ENCODE measurements at regions of chr2 and their contacts with region 1.

Region 1: GRCh38 chr2:65456064-65456463 is 23.7 kb upstream of the SPRED2 start:
- DNase-seq: no peak
- ATAC-seq: no peak
- H3K4me3 ChIP-seq: no peak overlapping the region
- H3K27ac ChIP-seq: no peak overlapping the region
- H3K4me1 ChIP-seq: no peaks in the 10 kb centered on the region
- H3K27me3 ChIP-seq: no peaks in the 10 kb centered on the region
- CTCF ChIP-seq: no peak
- POLR2A ChIP-seq: no peak

Region 2: DNA sequence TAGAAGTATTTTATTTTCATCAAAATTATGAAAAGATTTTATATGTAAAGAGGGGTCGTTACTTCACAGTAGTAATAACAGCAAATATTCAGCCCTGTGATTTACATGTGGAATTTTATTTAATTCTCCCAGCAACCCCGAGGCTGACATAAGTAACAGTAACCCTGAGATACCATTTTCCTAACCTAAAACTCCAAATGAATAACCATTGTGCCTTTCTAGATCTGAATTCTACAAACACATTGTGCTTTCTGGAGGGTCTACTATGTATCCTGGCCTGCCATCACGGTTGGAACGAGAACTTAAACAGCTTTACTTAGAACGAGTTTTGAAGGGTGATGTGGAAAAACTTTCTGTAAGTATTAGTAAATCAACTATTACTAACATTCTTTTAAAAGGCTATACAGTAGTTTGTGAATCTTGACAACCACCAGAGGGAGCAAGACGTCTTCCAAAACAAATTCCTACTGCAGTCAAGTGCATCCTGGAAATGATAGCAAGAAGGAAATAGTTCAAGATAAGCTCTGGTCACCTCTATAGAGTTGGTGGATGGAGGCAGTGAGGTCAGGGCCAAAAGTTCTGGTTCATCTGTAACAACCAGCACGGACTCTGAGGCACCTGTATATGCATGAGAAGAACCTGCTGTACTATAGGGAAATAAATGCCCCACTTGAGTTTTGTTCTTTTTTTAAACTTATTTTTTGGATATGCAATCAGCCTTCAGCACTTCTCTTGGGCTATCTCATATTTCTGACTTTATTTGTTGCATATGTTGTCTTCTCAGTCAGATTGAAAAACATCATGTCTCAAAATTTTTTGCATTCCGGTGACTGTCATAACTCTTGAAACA is 191.0 kb before region 1 on chr2:
- intact Hi-C with region 1: no loop called
- DNase-seq: peak in 1 of 5 donors; percentile 40
- ATAC-seq: peak; percentile 33 to 84 (median 81)
- H3K4me3 ChIP-seq: no peak overlapping the region
- H3K27ac ChIP-seq: no peak overlapping the region
- H3K4me1 ChIP-seq: peaks cover 0 to 12% (median 0%) of the 10 kb centered on the region in 12 donors
- H3K27me3 ChIP-seq: no peaks in the 10 kb centered on the region
- CTCF ChIP-seq: peak; percentile 58 to 81 (median 70)
- POLR2A ChIP-seq: no peak

Region 3: DNA sequence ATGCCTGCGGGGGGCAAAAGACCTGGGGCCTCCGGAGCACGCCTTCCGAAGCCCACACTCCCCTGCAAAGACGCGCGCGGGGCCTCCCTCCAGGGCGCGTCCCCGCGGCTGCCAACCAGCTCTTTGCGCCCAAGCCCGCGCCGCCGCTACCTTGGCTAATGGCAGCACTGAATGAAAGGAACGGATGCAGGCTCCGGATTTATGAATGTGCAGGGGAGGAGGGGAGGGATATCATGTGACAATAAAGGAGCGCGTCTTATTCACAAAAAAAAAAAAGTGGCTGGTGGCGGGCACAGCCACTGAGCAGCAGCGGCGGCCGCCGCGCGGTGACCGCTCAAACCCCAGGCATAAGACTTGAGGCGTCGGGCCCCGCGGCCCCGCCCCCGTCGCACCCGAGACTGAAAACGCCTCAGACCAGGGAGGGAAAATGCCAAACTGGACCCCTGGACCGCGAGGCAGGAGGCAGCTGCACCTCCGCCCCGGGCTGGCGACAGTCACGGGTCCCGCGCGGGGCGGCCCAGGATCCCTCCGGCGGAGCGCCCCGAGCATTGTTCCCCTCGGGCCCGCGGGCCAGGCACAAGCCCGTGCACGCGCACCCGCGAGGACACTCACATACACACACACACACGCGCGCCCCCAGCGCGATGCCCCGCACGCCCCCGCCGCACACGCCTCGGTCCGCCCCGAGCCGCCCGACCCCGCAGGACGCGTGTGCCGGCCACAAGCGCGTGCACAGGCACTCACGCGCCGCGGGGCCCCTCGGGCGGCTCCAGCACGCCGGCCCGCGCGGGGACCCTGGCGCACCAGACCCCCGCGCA is 25.3 kb before region 1 on chr2:
- intact Hi-C with region 1: no loop called
- DNase-seq: peak; percentile 55 to 80 (median 60)
- ATAC-seq: peak; percentile 12 to 46 (median 16)
- H3K4me3 ChIP-seq: peak overlapping the region; percentile 58 to 98 (median 89)
- H3K27ac ChIP-seq: peak overlapping the region; percentile 88 to 98 (median 92)
- H3K4me1 ChIP-seq: peaks cover 0 to 52% (median 24%) of the 10 kb centered on the region in 12 donors
- H3K27me3 ChIP-seq: peaks cover 0 to 3% (median 0%) of the 10 kb centered on the region in 9 donors
- CTCF ChIP-seq: no peak
- POLR2A ChIP-seq: peak in 1 of 2 donors; percentile 18

Region 4: GRCh38 chr2:65530547-65531320 is 74.7 kb after region 1 on chr2:
- intact Hi-C with region 1: loop called in 1 of 10 experiments (anchors 5 kb)
- DNase-seq: no peak
- ATAC-seq: no peak
- H3K4me3 ChIP-seq: no peak overlapping the region
- H3K27ac ChIP-seq: no peak overlapping the region
- H3K4me1 ChIP-seq: peaks cover 0 to 3% (median 0%) of the 10 kb centered on the region in 12 donors
- H3K27me3 ChIP-seq: no peaks in the 10 kb centered on the region
- CTCF ChIP-seq: no peak
- POLR2A ChIP-seq: no peak

Region 5: GRCh38 chr2:65638443-65638842 is 182.4 kb after region 1 on chr2:
- intact Hi-C with region 1: no loop called
- DNase-seq: no peak
- ATAC-seq: no peak
- H3K4me3 ChIP-seq: no peak overlapping the region
- H3K27ac ChIP-seq: no peak overlapping the region
- H3K4me1 ChIP-seq: no peaks in the 10 kb centered on the region
- H3K27me3 ChIP-seq: peaks cover 0 to 13% (median 0%) of the 10 kb centered on the region in 9 donors
- CTCF ChIP-seq: peak in 2 of 12 donors; percentile 6 to 10
- POLR2A ChIP-seq: no peak

Measured in heart left ventricle (tissue), 16 donors.